Activated naive CD4-positive, alpha-beta T cell treated with anti-CD3 and anti-CD28 coated beads for 36 hours (primary cell): ENCODE measurements at regions of chr11 and their contacts with region 1.

Region 1: GRCh38 chr11:74398244-74399159 is at the start of gene PGM2L1:
- DNase-seq: peak; percentile 95
- H3K4me3 Mint-ChIP-seq: peak within 1 kb of the TSS; percentile 98
- H3K27ac Mint-ChIP-seq: peak within 1 kb of the TSS; percentile 99
- H3K4me1 Mint-ChIP-seq: peaks cover 39% of the 10 kb centered on the region
- H3K27me3 Mint-ChIP-seq: no peaks in the 10 kb centered on the region
- total RNA-seq, gene PGM2L1: 11.9 to 13.4 TPM

Region 2: GRCh38 chr11:73760679-73761402 is 637.7 kb before region 1 on chr11 and contains the start of gene RAB6A:
- CTCF ChIA-PET with region 1: no interaction called
- intact Hi-C with region 1: loop called (anchors 10 kb)
- DNase-seq: peak; percentile 100
- H3K4me3 Mint-ChIP-seq: peak within 1 kb of the TSS; percentile 88
- H3K27ac Mint-ChIP-seq: peak within 1 kb of the TSS; percentile 90
- H3K4me1 Mint-ChIP-seq: peaks cover 34% of the 10 kb centered on the region
- H3K27me3 Mint-ChIP-seq: no peaks in the 10 kb centered on the region
- total RNA-seq, gene RAB6A: 36.7 to 41.2 TPM

Region 3: DNA sequence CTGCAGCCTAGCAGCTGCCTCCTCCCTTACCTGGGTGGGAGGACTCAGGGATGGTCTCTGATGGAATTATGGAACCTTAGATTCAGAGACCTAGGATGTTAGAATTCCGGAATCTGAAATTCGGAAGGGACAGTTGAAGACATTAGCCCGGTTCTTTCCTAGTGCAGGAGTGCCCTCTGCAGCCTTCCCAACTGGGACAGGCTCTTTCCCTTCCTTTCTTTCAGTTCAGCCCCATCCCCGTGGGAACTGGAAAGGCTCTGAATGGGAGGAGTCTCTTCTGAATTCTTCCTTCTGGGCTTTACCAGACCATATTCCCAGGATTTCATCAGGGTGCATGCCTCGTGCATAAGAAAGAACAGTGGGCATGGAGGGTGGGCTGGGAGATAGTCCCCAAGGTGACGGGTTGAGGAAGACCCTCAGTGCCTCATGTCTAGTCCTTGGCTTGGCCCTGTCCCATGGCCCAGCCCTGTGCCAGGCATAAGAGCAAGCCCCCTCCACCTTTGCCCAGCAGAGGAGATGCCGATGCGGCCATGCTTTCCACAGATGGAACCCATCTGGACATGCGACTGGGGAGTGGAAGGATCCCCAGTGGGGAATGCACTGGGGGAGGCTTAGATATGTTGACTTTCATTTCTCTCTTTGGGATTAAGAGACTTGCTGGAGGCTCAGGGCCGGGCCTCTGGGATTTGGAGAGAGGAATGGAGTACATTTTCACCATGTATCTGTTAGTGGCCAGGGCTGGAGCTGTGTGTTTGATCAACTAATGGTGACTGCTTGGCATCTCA is 433.2 kb before region 1 on chr11:
- CTCF ChIA-PET with region 1: no interaction called
- intact Hi-C with region 1: loop called (anchors 10 kb)
- DNase-seq: no peak
- H3K4me3 Mint-ChIP-seq: no peak overlapping the region
- H3K27ac Mint-ChIP-seq: no peak overlapping the region
- H3K4me1 Mint-ChIP-seq: peaks cover 44% of the 10 kb centered on the region
- H3K27me3 Mint-ChIP-seq: no peaks in the 10 kb centered on the region

Region 4: GRCh38 chr11:74418509-74418895 is 20.0 kb after region 1 on chr11:
- CTCF ChIA-PET with region 1: interaction called, 3 read pairs
- intact Hi-C with region 1: loop called (anchors 1 kb)
- DNase-seq: no peak
- H3K4me3 Mint-ChIP-seq: no peak overlapping the region
- H3K27ac Mint-ChIP-seq: peak overlapping the region; percentile 83
- H3K4me1 Mint-ChIP-seq: peaks cover 28% of the 10 kb centered on the region
- H3K27me3 Mint-ChIP-seq: no peaks in the 10 kb centered on the region

Region 5: GRCh38 chr11:74473382-74474173 is 75.1 kb after region 1 on chr11:
- CTCF ChIA-PET with region 1: no interaction called
- intact Hi-C with region 1: no loop called
- DNase-seq: no peak
- H3K4me3 Mint-ChIP-seq: no peak overlapping the region
- H3K27ac Mint-ChIP-seq: no peak overlapping the region
- H3K4me1 Mint-ChIP-seq: peaks cover 6% of the 10 kb centered on the region
- H3K27me3 Mint-ChIP-seq: peaks cover under 1% of the 10 kb centered on the region

Region 6: GRCh38 chr11:74592441-74593362 is 194.2 kb after region 1 on chr11 and contains the start of gene POLD3:
- CTCF ChIA-PET with region 1: no interaction called
- intact Hi-C with region 1: loop called (anchors 2 kb)
- DNase-seq: peak; percentile 98
- H3K4me3 Mint-ChIP-seq: peak within 1 kb of the TSS; percentile 89
- H3K27ac Mint-ChIP-seq: peak within 1 kb of the TSS; percentile 98
- H3K4me1 Mint-ChIP-seq: peaks cover 28% of the 10 kb centered on the region
- H3K27me3 Mint-ChIP-seq: no peaks in the 10 kb centered on the region
- total RNA-seq, gene POLD3: 84.8 to 91.9 TPM

Region 7: DNA sequence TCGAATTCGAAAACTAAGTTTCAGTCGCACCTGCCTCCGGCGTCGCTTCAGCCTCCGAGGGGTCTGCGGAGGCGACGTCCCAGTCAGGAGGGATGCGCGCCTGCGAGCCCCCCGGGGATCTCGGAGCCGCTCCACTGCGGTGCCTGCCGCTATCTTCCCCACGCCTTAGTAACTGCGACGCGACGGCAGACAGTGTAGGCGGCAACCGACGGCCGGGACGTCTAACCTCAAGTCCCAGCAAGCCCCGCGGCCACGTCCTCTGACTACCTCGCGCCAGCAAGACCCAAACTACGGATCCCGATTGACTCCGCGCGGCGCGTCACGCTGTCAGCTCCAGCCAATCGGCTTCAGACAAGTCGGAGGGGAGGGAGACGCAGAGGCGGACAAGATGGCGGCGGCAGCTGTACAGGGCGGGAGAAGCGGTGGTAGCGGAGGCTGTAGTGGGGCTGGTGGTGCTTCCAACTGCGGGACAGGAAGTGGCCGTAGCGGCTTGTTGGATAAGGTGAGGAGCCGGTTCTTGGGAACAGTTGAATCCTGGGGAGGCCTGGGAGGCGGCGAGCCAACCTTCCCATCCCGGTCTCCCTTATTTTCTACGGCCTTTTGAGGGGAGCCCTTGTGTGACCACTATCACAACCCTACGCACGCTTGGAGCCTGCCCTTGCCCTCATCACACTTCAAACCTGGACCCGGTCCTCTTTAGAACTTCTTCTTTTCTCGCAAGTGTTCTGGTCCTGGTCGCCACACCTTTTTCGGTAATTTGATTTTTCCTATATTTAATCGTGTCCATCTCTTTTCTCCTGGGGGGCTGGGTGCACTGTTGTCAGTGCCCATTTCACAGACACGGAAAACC is 550.6 kb after region 1 on chr11 and contains the starts of genes SPCS2 and XRRA1:
- CTCF ChIA-PET with region 1: no interaction called
- intact Hi-C with region 1: loop called (anchors 1 kb)
- DNase-seq: peak; percentile 100
- H3K4me3 Mint-ChIP-seq: peak within 1 kb of the TSS; percentile 98
- H3K27ac Mint-ChIP-seq: peak within 1 kb of the TSS; percentile 89
- H3K4me1 Mint-ChIP-seq: peaks cover 36% of the 10 kb centered on the region
- H3K27me3 Mint-ChIP-seq: no peaks in the 10 kb centered on the region
- total RNA-seq, gene SPCS2: 77.6 to 83.3 TPM
- total RNA-seq, gene XRRA1: 5.0 to 9.5 TPM

Region 8: GRCh38 chr11:75100314-75100713 is 701.8 kb after region 1 on chr11:
- CTCF ChIA-PET with region 1: no interaction called
- intact Hi-C with region 1: no loop called
- DNase-seq: peak; percentile 80
- H3K4me3 Mint-ChIP-seq: no peak overlapping the region
- H3K27ac Mint-ChIP-seq: no peak overlapping the region
- H3K4me1 Mint-ChIP-seq: peaks cover 16% of the 10 kb centered on the region
- H3K27me3 Mint-ChIP-seq: peaks cover 36% of the 10 kb centered on the region